Head of caudate nucleus (tissue), 42 donors: ENCODE measurements at regions of chr17 and their contacts with region 1.

Region 1: GRCh38 chr17:56715613-56716357 is 117.9 kb downstream of the C17orf67 start:
- DNase-seq: peak; percentile 57 to 93 (median 85)

Region 2: GRCh38 chr17:56499799-56500388 is 215.9 kb before region 1 on chr17:
- intact Hi-C with region 1: loop called (anchors 5 kb)
- DNase-seq: peak in 6 of 42 donors; percentile 10 to 29 (median 17)

Region 3: GRCh38 chr17:56577843-56578204 is 138.0 kb before region 1 on chr17:
- intact Hi-C with region 1: no loop called
- DNase-seq: peak in 17 of 42 donors; percentile 9 to 53 (median 36)

Region 4: GRCh38 chr17:56592487-56593085 is 123.2 kb before region 1 on chr17:
- intact Hi-C with region 1: loop called (anchors 2 kb)
- DNase-seq: peak in 41 of 42 donors; percentile 26 to 87 (median 72)

Region 5: GRCh38 chr17:56638591-56639051 is 77.2 kb before region 1 on chr17:
- intact Hi-C with region 1: no loop called
- DNase-seq: no peak

Region 6: DNA sequence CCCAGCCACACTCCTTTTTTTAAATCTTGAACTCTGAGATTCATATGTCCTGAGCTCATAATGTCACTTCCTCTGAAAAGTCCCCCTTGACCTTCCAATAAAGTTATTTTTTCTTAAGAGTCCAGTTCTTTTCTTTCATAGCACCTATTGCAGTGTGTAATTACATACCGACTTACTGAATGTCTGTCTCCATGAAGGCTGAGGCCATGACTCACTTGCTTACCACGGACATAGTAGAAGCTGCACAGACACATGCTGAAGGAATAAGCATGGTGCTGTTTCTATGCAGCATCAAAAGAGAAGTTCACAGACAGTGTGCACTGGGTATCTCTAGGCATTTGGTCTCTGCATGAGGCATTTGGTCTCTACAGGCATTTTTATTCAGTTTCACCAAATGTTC is 40.8 kb after region 1 on chr17:
- intact Hi-C with region 1: no loop called
- DNase-seq: no peak